ENCODE measurements at regions of chr5 and their contacts with region 1.

Region 1: DNA sequence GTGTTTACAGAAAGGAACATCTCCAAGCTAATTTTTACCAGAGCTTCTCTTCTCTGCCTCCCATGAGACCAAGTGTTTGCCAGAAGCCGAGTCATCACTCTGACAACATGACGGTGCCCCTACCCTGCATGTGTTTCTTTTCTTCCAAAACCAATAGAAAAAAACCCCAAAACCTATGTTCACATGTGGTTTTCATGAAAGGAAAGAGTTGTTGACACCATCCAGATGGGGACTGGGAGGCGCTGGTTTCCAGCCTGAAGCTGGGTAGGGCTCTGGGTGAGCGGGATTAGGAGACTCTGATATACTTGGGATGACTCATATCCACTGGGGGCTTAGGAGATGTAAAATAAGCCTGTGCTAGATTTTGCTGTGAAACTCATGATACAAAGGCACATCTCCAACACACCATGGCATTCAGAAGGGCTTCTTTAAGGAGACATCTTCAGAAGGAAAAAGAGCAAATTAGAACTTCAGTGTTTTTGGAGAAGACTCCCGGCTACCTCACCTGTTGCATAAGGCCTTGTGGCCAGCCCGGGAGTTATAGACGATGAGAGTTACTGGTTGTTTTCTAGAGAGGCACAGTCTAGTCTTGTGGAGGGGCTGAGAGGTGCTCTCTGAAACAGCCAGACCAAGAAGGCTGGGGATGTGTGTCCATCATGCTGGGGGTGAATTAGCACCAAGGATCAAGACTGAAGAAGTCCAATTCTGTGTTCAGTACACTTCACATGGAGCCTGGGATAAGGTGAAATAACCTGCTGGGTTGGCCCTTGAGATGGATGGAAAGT is 108.9 kb upstream of the LHFPL2 start:
- DNase-seq: peak; percentile 27
- ATAC-seq: peak; percentile 21
- H3K4me3 ChIP-seq: no peak overlapping the region
- H3K4me3 Mint-ChIP-seq: peak overlapping the region; percentile 78
- H3K27ac ChIP-seq: peak overlapping the region; percentile 53 to 70
- H3K27ac Mint-ChIP-seq: peak overlapping the region; percentile 96
- H3K4me1 ChIP-seq: peaks cover 63 to 64% of the 10 kb centered on the region in 2 donors
- H3K4me1 Mint-ChIP-seq: peaks cover 78% of the 10 kb centered on the region
- H3K27me3 ChIP-seq: no peaks in the 10 kb centered on the region
- H3K27me3 Mint-ChIP-seq: no peaks in the 10 kb centered on the region
- CTCF ChIP-seq: no peak

Region 2: DNA sequence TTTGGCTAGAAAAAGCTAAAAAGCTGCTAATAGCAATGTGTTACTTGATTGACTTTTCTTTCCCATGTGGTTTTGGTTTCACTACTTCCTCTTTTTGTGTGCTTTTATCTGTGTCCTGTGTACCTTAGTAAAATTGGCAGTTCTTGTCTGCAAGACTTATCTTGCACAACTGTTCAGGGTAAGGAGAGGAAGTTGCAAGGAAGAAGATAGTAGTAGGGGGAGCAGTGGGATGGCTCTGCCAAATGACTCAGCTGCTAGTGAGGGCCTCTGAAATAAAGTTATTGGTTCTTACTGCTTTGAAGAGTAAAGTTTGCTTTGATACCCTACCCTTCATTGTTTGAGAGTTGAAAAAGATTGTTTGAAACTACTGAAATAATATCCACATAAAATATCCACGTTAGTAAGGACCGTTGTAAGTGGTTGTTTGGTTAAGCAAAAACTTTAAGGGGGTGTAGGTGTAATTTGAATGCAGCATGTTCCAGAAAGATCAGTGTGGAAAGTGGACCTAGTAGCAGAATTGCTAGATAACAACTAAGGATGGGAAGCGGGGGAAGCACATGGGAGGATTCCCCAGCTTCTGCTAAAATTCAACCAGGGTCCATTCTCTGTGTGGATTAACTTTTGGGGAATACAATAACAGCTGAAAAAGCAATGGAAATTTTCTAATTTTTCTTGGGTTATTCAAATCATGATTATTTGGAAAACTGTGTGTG is 273.5 kb before region 1 on chr5:
- CTCF ChIA-PET with region 1: no interaction called
- POLR2A ChIA-PET with region 1: no interaction called
- intact Hi-C with region 1: loop called (anchors 5 kb)
- DNase-seq: peak; percentile 71
- ATAC-seq: peak; percentile 98
- H3K4me3 ChIP-seq: no peak overlapping the region
- H3K4me3 Mint-ChIP-seq: peak overlapping the region; percentile 33
- H3K27ac ChIP-seq: no peak overlapping the region
- H3K27ac Mint-ChIP-seq: peak overlapping the region; percentile 2
- H3K4me1 ChIP-seq: peaks cover 15 to 18% of the 10 kb centered on the region in 2 donors
- H3K4me1 Mint-ChIP-seq: peaks cover 22% of the 10 kb centered on the region
- H3K27me3 ChIP-seq: no peaks in the 10 kb centered on the region
- H3K27me3 Mint-ChIP-seq: no peaks in the 10 kb centered on the region
- CTCF ChIP-seq: no peak

Region 3: GRCh38 chr5:78648359-78649210 is 108.9 kb before region 1 on chr5 and contains the start of gene LHFPL2:
- CTCF ChIA-PET with region 1: interaction called, 3 read pairs
- POLR2A ChIA-PET with region 1: interaction called, 5 read pairs
- intact Hi-C with region 1: loop called (anchors 2 kb)
- DNase-seq: peak; percentile 73
- ATAC-seq: peak; percentile 74
- H3K4me3 ChIP-seq: peak within 1 kb of the TSS; percentile 43 to 72 (median 64)
- H3K4me3 Mint-ChIP-seq: peak within 1 kb of the TSS; percentile 91
- H3K27ac ChIP-seq: no peak within 1 kb of the TSS
- H3K27ac Mint-ChIP-seq: peak within 1 kb of the TSS; percentile 83
- H3K4me1 ChIP-seq: peaks cover 16 to 18% of the 10 kb centered on the region in 2 donors
- H3K4me1 Mint-ChIP-seq: peaks cover 26% of the 10 kb centered on the region
- H3K27me3 ChIP-seq: peaks cover 0 to 11% (median 6%) of the 10 kb centered on the region in 4 experiments
- H3K27me3 Mint-ChIP-seq: no peaks in the 10 kb centered on the region
- CTCF ChIP-seq: no peak
- total RNA-seq, gene LHFPL2: 33.0 and 35.5 TPM in 2 replicates

Region 4: DNA sequence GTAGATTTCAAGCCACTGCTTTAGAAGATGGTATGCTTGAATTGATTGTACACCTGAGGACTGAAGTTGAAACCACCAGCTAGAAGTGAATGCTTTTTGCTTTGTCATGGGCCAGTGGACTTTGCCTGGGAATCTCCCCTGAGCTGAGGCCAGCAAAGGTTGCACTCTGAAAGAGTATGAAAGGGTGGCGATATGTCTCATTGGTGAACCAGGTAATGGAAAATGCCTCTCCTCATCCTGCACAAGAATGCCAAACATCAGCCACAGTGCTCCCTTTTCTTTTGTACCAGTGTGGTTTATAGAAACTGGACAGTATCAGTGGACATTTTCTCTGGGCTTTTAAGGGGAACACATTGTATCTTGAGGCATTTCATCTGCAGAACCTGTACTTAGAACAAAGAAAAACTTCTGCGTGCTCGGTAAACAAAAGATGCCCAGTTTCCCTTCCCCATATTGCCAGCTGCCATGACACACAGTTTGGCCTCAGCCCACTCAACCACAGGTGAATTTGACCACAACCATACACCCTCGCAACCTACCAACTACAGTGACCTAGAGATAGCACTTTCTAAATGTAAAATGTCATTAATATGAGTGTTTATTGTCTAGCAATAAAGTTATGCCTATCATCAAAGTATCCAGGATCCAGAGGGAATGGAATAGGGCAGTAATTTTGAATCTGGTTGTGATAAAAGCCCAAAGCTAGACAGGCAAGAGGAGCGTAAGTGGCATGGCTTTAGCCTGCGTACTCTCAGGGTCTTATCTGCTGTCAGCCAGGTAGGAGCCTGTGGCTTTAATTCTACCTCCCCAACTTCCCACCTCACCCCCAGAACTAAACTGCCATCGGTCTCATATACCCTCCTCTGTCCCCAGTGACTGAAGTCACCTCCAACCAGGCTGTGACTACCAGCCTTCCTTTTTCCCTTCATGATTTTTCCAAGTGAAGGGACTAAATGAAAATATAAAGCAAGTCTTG is 29.4 kb before region 1 on chr5:
- CTCF ChIA-PET with region 1: interaction called, 10 read pairs
- POLR2A ChIA-PET with region 1: interaction called, 8 read pairs
- intact Hi-C with region 1: loop called (anchors 1 kb)
- DNase-seq: peak; percentile 88
- ATAC-seq: peak; percentile 84
- H3K4me3 ChIP-seq: peak overlapping the region in 3 of 5 experiments; percentile 16 to 30 (median 25)
- H3K4me3 Mint-ChIP-seq: peak overlapping the region; percentile 79
- H3K27ac ChIP-seq: peak overlapping the region; percentile 85 to 89
- H3K27ac Mint-ChIP-seq: peak overlapping the region; percentile 99
- H3K4me1 ChIP-seq: peaks cover 60 to 68% of the 10 kb centered on the region in 2 donors
- H3K4me1 Mint-ChIP-seq: peaks cover 67% of the 10 kb centered on the region
- H3K27me3 ChIP-seq: no peaks in the 10 kb centered on the region
- H3K27me3 Mint-ChIP-seq: no peaks in the 10 kb centered on the region
- CTCF ChIP-seq: no peak

Region 5: GRCh38 chr5:78792345-78793145 is 35.1 kb after region 1 on chr5:
- CTCF ChIA-PET with region 1: interaction called, 3 read pairs
- POLR2A ChIA-PET with region 1: interaction called, 3 read pairs
- intact Hi-C with region 1: loop called (anchors 1 kb)
- DNase-seq: peak; percentile 51
- ATAC-seq: peak; percentile 65
- H3K4me3 ChIP-seq: peak overlapping the region in 1 of 5 experiments; percentile 38
- H3K4me3 Mint-ChIP-seq: peak overlapping the region; percentile 55
- H3K27ac ChIP-seq: peak overlapping the region; percentile 25 to 37
- H3K27ac Mint-ChIP-seq: peak overlapping the region; percentile 62
- H3K4me1 ChIP-seq: peaks cover 33 to 37% of the 10 kb centered on the region in 2 donors
- H3K4me1 Mint-ChIP-seq: peaks cover 68% of the 10 kb centered on the region
- H3K27me3 ChIP-seq: no peaks in the 10 kb centered on the region
- H3K27me3 Mint-ChIP-seq: no peaks in the 10 kb centered on the region
- CTCF ChIP-seq: no peak

Region 6: DNA sequence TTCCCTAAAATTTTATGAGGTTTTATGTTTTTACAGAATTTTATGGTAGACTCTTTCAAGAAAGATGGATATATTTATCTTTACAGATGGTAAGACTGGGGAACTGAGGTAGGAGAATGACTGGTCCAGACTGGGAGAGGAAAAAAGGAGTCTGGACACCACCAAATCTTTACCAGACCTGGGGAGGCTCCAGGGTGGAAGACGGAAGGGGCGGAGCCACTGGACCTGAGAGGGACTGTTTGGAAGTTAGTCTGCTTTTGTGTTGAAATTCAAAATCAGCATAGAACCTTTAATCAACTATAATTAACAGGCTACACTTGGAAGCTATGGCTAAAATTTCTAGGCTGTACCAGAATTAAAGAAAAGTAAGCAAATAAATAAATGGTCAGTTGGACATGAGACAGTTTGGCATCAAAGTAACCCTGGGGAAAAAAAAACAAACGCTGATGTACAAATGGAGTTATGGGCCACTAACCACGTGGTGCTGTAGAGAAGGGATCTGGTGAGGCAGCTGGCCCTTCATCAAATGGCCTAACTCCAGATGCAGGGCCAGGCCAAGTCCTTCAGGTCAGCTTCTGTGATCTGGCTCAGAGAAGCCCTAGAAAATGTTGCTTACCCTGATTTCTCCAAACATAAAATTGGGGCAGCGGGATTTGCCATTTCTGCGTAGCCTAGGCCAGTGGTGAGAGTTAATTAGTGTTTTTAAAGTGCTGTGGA is 72.5 kb after region 1 on chr5:
- CTCF ChIA-PET with region 1: no interaction called
- POLR2A ChIA-PET with region 1: no interaction called
- intact Hi-C with region 1: loop called (anchors 5 kb)
- DNase-seq: no peak
- ATAC-seq: no peak
- H3K4me3 ChIP-seq: no peak overlapping the region
- H3K4me3 Mint-ChIP-seq: no peak overlapping the region
- H3K27ac ChIP-seq: no peak overlapping the region
- H3K27ac Mint-ChIP-seq: peak overlapping the region; percentile 46
- H3K4me1 ChIP-seq: peaks cover 24 to 33% of the 10 kb centered on the region in 2 donors
- H3K4me1 Mint-ChIP-seq: peaks cover 35% of the 10 kb centered on the region
- H3K27me3 ChIP-seq: no peaks in the 10 kb centered on the region
- H3K27me3 Mint-ChIP-seq: no peaks in the 10 kb centered on the region
- CTCF ChIP-seq: no peak

Region 7: DNA sequence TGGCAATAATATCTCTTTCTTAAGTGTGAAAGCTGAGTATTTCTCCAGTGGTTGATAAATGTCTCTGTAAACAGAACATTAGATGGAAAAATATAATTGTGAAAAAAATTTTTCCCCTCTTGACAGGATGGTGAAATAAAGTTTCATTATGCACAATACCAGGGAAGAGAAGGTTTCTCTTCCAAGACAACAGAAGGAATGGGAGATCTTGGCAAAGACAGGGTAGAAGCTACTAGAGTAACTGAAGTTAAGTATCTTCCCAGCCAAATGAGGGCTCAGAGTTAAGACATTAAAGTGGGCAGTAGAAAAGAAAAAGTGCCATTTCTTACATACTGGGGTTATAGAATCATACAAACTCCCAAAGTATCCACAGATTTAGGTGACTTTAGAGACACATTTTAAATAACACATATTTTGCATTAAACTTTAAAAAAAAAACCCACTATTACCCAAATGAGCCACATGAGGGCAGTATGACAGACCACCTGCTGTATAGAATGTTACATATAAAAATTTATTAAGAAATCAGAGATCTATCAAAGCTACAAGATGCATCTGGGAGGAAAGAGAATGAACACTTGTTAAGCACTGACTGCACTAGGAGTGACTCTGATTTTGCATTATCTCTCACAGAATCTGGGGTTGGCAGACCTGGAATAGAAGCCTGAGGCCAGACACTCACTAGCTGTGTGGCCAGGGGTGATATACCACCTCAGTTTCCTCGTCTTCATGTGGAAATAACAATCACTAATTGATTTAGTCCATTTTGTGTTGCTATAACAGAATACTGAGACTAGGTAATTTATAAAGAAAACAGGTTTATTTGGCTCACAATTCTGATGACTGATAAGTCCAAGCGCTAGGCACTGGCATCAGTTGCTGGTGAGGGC is 129.1 kb after region 1 on chr5:
- CTCF ChIA-PET with region 1: interaction called, 3 read pairs
- POLR2A ChIA-PET with region 1: no interaction called
- intact Hi-C with region 1: loop called (anchors 10 kb)
- DNase-seq: peak; percentile 38
- ATAC-seq: no peak
- H3K4me3 ChIP-seq: no peak overlapping the region
- H3K4me3 Mint-ChIP-seq: no peak overlapping the region
- H3K27ac ChIP-seq: no peak overlapping the region
- H3K27ac Mint-ChIP-seq: peak overlapping the region; percentile 60
- H3K4me1 ChIP-seq: peaks cover 24 to 36% of the 10 kb centered on the region in 2 donors
- H3K4me1 Mint-ChIP-seq: peaks cover 36% of the 10 kb centered on the region
- H3K27me3 ChIP-seq: no peaks in the 10 kb centered on the region
- H3K27me3 Mint-ChIP-seq: no peaks in the 10 kb centered on the region
- CTCF ChIP-seq: peak; percentile 69

Measured in B cell (primary cell).